Right ventricle myocardium superior (tissue), 1 donor: ENCODE measurements at regions of chr4 and their contacts with region 1.

Region 1: DNA sequence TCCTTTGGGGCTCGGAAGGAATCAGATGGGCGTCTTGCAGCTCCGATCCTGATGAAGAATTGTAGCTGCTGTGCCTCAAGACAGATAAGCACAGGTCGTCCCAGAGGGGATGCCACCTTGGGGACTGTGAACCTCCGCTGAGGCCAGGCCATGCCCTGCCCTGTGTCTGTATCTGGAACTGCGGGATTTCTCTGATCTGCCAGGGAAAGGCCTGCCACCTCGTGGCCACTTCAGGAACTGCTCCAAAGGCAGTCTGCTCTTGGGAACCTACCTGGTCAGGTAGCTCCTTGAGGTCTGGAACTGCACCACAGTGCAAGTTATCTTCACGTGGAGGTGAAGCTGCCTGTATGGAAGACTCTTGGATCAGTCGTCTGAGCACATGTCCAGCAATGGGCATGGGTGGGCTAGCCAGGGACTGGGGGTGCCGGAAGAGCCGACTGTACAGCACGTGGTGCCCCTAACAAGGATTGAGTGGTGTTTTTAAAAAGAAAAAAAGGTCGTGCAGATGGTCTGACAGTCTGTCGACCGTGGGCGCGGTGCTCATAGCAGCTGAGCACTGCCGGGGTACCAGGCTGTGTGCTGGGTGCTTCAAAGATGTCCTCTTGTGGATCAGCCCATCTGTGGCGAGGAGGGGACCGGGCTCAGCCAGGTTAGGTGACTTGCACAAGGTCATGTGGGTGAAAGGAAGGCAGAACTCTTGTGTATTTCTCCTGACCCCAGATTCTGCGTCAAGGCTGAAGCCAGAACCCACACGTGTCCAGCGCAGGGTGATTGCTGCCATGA is 3.1 kb upstream of the GRPEL1 start:
- DNase-seq: peak; percentile 87
- ATAC-seq: peak; percentile 14

Region 2: DNA sequence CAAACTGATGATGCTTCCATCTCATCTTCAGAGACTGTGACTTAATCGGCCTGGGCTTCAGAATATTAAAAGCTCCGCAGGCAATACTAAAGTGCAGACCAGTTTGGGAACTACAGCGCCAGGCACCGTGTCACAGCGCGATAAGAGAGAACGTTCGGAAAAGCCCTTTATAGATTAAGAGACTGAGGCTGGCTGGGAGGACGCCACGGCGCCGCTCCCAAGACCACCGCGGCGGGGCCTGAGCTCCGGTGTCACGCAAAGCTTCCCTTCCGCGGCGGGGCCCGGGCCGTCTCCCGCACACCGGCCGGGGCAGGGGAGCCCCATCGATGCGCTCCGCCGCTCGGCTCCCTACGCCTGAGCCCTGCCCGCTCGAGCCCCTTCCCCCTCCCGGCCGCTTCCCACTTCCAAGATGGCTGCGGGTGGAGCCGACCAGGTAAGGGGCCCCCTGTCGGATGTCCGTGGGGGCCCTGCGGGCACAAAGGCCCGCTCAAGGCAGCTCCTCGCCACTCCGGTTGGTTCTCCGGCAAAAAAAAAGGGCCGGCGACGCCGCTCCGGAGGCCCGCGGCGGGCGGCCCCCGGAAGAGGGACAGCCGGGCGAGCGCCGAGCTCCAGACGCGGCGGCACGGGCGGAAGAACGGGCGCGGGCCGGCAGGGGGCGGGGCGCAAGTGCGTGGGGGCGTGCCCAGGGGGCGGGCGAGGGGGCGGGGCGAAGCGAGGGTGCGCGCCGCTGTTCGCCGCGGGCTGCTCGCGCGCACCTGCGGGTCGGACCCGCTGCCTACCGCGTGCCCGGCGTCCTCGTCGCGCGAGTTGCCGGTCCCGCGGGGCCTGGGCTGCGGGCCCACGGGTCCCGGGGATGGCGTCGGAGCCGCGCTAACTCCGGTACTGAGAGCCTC is 161.6 kb before region 1 on chr4 and contains the start of gene TBC1D14:
- intact Hi-C with region 1: loop called (anchors 5 kb)
- DNase-seq: peak; percentile 93
- ATAC-seq: peak; percentile 93
- total RNA-seq, gene TBC1D14: 33.1 TPM

Region 3: DNA sequence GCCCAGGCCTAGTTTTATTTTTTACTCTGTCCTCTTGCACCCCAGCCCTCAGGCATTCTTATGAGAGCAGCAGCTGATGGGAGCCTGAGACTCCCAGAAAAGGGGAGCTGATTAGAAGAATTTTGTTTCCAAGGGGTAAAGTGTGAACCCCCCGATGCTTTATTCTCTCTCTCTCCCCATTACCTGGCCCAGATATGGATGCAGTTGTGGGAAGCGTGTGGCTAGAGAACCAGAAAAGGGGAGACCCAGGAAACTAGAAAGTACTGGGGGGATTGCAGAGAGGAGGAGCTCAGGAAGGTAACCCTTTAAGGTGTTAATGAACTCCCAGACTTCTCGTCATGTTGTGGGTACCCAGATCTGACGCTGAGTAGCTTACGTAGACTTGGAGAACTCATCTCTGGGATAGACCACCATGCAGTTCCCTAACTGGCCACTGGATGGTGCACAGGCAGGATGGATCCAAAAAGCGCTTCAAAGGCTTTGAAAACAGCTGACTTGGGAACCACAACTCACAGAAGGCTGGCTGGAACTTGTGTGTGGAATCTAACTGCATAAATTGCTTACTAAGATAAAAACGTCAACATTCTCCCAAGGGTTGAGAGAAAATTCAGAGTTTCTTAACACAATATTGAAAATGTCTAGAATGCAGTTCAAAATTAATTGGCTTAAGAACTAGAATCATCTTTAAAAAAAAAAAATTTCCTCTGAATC is 96.6 kb before region 1 on chr4:
- intact Hi-C with region 1: loop called (anchors 2 kb)
- DNase-seq: peak; percentile 82
- ATAC-seq: peak; percentile 95

Region 4: DNA sequence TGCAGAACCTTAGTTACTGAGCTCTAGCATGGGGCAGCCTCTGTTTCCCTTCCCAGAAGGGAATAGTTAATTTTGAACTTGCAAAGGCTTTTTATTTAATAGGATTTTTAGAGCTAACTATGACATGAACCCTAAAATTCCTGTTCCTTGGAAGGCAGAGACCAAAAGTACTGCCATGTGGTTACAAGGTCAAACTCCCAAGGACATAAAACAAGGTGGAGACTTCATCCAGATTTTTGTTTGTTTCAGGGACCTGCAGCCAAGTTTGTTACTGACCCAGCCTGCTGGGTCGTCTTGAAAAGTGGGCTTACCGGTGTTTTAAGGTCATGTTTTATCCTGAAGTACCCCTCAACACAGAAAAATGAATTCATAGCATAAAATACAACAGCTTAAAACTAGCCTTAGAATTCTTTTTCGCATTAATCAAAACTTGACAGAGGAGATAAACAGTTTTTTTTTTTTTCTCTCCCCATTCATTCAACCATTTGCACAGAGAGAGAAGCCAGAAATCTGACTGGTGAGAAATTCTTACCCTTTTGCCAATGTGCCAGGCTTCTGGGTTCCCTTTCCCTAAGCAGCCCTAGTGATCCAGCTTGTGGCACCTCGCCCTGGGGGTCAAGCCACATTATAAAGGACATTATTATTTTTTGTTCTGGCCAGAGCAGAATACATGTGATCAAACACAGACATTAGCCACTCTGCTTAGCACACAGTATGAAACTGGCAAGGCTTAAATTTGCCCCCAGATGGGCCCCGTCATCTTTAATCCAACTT is 18.5 kb after region 1 on chr4:
- intact Hi-C with region 1: no loop called
- DNase-seq: no peak
- ATAC-seq: no peak